ENCODE measurements at regions of chr3 and their contacts with region 1.

Region 1: DNA sequence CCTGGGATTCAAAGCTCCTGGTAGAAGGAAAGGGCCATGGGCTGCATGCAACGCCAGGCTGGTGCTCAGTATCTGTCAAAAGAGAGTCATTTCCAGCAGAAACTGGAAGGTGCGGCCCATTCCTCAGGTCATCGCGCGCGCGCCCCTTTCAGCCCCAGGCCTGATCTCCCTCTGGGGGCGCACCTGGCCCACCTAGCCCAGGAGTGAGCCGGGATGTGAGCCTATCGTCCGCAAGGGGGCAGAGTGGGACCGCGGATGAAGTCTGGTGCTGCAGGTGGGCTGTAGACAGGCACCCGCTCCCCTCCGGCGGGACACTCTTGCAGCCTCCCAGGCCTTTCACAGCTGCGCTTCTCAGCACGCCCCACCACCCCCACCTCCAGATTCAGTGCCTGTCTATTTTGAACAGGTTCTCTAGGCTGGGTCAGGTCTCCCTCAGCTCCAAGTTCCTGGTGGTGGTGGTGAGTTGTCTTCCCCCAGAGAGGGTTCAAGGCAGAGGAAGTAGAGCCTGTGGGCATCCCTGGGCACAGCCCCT is 5.8 kb upstream of the RPL29 start:
- DNase-seq: peak; percentile 90
- H3K4me3 ChIP-seq: no peak overlapping the region
- H3K27ac ChIP-seq: no peak overlapping the region
- H3K4me1 ChIP-seq: peaks cover 15% of the 10 kb centered on the region
- CTCF ChIP-seq: peak; percentile 99

Region 2: GRCh38 chr3:52123106-52123725 is 121.7 kb after region 1 on chr3:
- CTCF ChIA-PET with region 1: no interaction called
- POLR2A ChIA-PET with region 1: no interaction called
- intact Hi-C with region 1: loop called (anchors 1 kb)
- DNase-seq: peak; percentile 63
- H3K4me3 ChIP-seq: no peak overlapping the region
- H3K27ac ChIP-seq: no peak overlapping the region
- H3K4me1 ChIP-seq: peaks cover 22% of the 10 kb centered on the region
- CTCF ChIP-seq: peak; percentile 93

Region 3: DNA sequence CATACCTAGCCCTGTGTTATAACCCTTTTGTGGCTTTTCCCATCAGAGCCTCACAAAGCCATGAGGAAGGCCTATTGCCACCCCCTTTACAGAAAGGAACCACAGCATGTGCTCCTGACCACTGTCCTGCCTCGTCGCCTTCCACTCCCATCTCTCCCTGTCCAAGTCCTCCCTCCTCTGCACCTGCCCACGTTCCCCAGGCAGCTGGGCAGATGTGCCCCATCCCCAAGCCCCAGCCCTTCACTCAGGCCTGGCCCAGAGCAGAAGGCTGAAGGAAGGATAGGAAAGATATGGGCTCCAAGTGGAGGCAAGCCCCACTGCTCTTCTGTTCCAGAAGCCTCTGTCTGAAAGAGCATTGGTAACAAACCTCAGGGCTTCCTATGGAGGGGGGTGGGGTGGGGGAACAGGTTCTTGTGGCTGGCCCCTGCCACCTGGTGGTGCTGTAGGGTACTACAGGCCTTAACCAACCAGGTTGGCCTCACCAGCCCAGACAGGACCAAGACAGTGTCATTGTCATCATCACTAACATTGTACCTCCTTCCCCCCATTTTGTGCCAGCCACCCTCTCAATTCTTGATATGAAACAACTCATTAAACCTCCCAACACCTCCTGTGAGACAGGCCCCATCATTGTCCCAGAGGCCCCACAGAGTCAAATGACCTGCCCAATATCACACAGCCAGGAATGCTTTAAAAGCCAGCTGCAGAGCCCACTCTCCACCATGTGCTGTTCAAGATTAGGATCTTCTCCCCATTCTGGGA is 142.7 kb after region 1 on chr3:
- CTCF ChIA-PET with region 1: no interaction called
- POLR2A ChIA-PET with region 1: no interaction called
- intact Hi-C with region 1: loop called (anchors 1 kb)
- DNase-seq: peak; percentile 81
- H3K4me3 ChIP-seq: no peak overlapping the region
- H3K27ac ChIP-seq: no peak overlapping the region
- H3K4me1 ChIP-seq: no peaks in the 10 kb centered on the region
- CTCF ChIP-seq: peak; percentile 94

Region 4: DNA sequence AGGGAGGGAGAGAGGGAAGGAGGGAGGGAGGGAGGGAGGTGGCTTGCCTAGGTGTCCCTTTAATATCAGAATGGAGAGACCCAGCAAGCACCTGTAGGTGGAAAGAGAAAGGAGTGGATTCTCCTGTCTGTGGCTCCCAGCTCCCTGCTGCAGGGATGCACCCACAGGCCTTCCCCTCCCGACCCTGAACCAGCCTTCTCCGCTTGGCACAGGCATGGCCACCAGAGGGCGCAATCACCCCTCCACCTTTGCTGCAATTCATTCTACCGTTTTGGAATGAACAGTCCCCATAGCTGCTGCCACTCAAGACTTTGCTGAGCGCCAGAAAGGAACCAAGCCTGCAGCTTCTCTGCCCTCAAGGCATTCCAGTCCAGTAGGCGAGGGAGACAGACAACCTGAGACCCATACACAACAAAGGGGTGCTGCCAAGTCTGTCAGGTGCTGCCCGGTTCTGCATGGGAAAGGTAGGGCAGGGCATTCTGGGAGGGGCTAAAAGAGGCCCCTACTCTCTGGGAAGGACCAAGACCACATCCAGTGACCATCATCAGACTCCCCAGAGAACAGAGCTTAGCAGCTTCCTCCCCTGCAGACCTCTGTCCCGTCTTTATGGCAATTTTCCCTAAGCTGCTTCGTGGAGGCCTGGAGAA is 219.0 kb after region 1 on chr3:
- CTCF ChIA-PET with region 1: no interaction called
- POLR2A ChIA-PET with region 1: no interaction called
- intact Hi-C with region 1: loop called (anchors 1 kb)
- DNase-seq: peak; percentile 85
- H3K4me3 ChIP-seq: no peak overlapping the region
- H3K27ac ChIP-seq: peak overlapping the region; percentile 39
- H3K4me1 ChIP-seq: peaks cover 26% of the 10 kb centered on the region
- CTCF ChIP-seq: peak; percentile 93

Measured in OCI-LY7 (cell line).